ENCODE measurements at regions of chr11 and their contacts with region 1.

Region 1: GRCh38 chr11:19818619-19819018 is 106.0 kb downstream of the NAV2 start:
- DNase-seq: no peak
- H3K4me3 ChIP-seq: no peak overlapping the region
- H3K27me3 ChIP-seq: no peaks in the 10 kb centered on the region
- CTCF ChIP-seq: no peak

Region 2: GRCh38 chr11:19589567-19590260 is 228.9 kb before region 1 on chr11:
- CTCF ChIA-PET with region 1: no interaction called
- POLR2A ChIA-PET with region 1: interaction called, 20 read pairs
- DNase-seq: no peak
- H3K4me3 ChIP-seq: no peak overlapping the region
- H3K27me3 ChIP-seq: no peaks in the 10 kb centered on the region
- CTCF ChIP-seq: no peak

Measured in BJ (cell line).